Activated B cell treated with CpG ODN at 0.5 μM for 24 hours (primary cell): ENCODE measurements at regions of chr15 and their contacts with region 1.

Region 1: DNA sequence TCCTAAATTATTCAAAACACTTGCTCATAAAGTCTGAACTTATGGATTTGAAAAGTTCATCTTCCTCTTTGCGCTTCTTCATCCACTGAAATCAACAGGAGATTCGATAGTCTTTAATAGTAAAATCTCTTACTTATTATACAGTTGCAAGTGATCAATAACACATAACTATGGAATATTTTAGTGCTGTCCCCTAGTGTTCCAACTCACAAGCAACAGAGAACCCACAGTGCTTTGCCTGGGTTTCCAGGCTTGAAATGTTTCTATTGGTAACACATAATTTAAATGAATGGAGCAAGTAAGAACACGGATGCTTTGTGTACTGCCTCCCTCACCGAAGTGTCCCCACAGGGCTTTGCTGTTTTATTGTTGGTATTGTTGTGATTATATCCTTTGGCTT is 93.5 kb downstream of the WDR72 start:
- DNase-seq: no peak
- ATAC-seq: no peak
- H3K4me3 Mint-ChIP-seq: no peak overlapping the region
- H3K27ac Mint-ChIP-seq: no peak overlapping the region
- H3K4me1 Mint-ChIP-seq: no peaks in the 10 kb centered on the region
- H3K27me3 Mint-ChIP-seq: no peaks in the 10 kb centered on the region
- CTCF ChIP-seq: no peak

Region 2: GRCh38 chr15:53716909-53717876 is 51.3 kb after region 1 on chr15:
- CTCF ChIA-PET with region 1: no interaction called
- POLR2A ChIA-PET with region 1: no interaction called
- intact Hi-C with region 1: loop called (anchors 10 kb)
- DNase-seq: no peak
- ATAC-seq: no peak
- H3K4me3 Mint-ChIP-seq: no peak overlapping the region
- H3K27ac Mint-ChIP-seq: no peak overlapping the region
- H3K4me1 Mint-ChIP-seq: no peaks in the 10 kb centered on the region
- H3K27me3 Mint-ChIP-seq: no peaks in the 10 kb centered on the region
- CTCF ChIP-seq: no peak